Panc1 (cell line): ENCODE measurements at regions of chr1 and their contacts with region 1.

Region 1: DNA sequence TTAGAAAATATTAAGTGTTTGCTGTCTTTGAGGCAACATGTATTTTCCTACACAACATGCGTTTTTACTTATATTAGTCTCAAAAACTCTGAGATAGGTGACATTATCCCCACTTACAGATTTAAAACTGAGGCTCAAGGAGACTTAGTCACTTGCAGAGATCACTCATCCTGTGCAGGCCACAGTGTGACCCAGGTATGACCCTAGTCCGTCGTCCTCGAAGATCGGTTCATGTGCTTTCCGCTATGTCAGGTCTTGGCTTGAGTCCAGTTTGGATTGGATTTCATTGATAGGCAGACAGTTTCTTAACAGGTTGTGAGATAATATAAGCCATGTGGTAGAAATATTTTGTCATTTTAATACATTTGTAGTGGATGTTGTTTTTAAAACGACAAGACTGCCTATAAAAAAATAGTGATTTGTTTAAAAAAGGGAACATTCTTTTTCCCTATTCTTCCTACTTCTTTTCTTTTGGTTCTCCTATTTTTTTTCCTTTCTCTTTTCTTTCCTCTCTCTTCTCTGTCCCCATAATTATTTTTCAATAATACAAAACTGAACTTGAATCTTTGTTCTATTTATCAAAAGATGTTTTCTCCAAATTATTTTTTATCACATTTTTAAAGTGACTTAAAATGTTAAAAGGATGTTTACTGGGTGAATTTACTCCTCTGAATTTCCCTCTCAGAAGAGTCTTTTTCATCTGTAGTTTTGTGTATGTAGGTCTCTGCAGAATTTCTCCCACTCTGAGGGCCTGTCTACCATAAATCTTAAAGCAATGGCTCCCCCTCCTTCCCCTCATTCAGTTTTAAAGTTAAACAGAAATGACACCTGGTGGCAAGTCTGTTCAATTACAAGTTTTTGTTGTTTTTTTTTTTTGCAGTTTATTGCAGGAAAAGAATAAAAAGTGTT is 81.8 kb downstream of the PHTF1 start:
- DNase-seq: peak; percentile 47
- ATAC-seq: peak; percentile 68; the same call in 1 of the 2 replicates
- H3K4me3 ChIP-seq: no peak overlapping the region
- H3K27ac ChIP-seq: no peak overlapping the region
- H3K4me1 ChIP-seq: no peaks in the 10 kb centered on the region
- H3K27me3 ChIP-seq: no peaks in the 10 kb centered on the region
- CTCF ChIP-seq: peak; percentile 46; the same call in 1 of the 2 replicates

Region 2: GRCh38 chr1:113140588-113141446 is 536.7 kb before region 1 on chr1:
- CTCF ChIA-PET with region 1: no interaction called
- POLR2A ChIA-PET with region 1: no interaction called
- in situ Hi-C with region 1: no loop called
- intact Hi-C with region 1: loop called (anchors 2 kb)
- DNase-seq: peak; percentile 39
- ATAC-seq: peak; percentile 96
- H3K4me3 ChIP-seq: no peak overlapping the region
- H3K27ac ChIP-seq: no peak overlapping the region
- H3K4me1 ChIP-seq: no peaks in the 10 kb centered on the region
- H3K27me3 ChIP-seq: no peaks in the 10 kb centered on the region
- CTCF ChIP-seq: peak; percentile 77

Region 3: DNA sequence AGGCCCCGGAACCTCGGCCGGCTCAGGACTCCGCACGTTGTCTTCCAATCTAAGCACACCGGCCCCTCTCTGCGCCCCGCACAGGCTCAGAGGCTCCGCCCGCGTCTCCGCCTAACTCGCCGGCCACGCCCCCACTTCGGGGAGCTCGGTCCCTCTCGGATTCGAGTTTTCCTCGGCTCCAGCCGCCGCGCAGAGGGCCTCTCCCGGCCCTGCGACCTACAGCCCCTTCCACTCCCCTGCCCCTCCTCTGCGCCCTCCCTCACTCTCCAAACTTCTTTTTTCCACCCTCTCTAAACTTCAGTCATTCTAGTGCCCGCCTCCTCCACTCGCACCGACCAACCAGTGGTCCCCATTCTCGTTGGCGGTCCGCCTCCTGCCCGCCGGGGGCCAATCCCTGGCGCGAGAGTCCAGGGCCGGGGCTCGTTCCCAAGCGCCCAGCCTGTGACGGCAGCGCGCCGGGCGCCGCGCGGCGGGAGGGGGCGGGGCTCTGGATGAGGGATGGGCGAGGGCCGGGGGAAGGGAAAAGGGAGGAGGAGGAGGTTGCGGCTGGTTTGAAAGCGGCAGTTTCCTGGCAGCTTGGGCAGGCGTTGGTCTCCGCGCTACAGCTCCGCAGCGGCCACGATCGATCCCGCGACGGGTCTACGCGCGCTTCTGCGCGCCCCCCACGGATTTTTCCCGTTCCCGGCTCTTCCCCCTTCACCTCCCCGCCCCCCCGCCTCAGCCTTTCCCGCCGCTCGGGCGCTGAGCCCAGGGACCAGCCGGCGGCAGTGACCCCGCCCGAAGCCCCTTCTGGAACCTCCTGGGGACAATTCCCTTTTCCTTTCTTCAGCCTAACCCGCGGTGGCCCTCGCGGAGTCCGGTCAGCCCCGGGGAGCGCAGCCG is 287.3 kb before region 1 on chr1 and contains the start of gene MAGI3:
- CTCF ChIA-PET with region 1: no interaction called
- POLR2A ChIA-PET with region 1: no interaction called
- in situ Hi-C with region 1: no loop called
- intact Hi-C with region 1: loop called (anchors 10 kb)
- DNase-seq: peak; percentile 81
- ATAC-seq: peak; percentile 95
- H3K4me3 ChIP-seq: peak within 1 kb of the TSS; percentile 74 to 89
- H3K27ac ChIP-seq: peak within 1 kb of the TSS; percentile 69
- H3K4me1 ChIP-seq: peaks cover 20% of the 10 kb centered on the region
- H3K27me3 ChIP-seq: no peaks in the 10 kb centered on the region
- CTCF ChIP-seq: no peak
- total RNA-seq, gene MAGI3: 10.9 TPM